ENCODE measurements at regions of chr20 and their contacts with region 1.

Region 1: DNA sequence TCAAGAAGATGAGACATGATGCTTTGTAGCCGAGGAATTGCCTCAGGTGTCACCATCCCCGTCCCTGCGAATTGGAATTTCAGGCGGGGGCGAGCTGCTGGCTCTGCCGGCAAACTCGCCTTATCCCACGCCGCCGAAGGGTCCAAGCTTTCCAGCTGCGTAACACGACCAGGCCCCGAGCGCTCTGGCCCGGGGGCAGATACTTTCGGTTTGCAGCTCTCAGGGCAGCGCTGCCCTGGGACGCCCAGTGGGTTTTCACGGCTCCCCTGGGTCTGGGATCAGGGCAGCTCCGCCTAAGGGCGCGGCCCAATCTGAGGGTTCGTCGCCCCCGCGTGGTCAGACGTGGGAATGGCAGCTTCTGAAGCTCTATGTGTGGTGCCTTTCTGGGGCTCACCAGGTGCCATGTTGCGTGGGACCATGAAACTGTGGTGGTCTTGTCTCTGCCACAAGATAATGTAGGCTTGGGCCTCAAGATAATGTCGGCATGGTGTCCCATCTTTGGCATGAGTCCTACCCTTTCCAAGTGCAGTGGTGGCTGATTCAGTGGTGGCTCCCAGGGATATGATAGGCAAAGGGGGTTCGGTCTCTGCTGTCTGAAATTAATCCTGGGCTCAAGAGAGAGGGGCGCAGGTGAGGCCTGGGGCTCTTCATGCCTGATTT is 20.9 kb downstream of the PIGT start:
- H3K4me3 ChIP-seq: peak overlapping the region; percentile 59
- H3K27ac ChIP-seq: no peak overlapping the region
- H3K4me1 ChIP-seq: 0 out of 2 replicates have a peak, but pooled peaks cover 4% of the 10 kb centered on the region
- CTCF ChIP-seq: peak; percentile 97

Region 2: DNA sequence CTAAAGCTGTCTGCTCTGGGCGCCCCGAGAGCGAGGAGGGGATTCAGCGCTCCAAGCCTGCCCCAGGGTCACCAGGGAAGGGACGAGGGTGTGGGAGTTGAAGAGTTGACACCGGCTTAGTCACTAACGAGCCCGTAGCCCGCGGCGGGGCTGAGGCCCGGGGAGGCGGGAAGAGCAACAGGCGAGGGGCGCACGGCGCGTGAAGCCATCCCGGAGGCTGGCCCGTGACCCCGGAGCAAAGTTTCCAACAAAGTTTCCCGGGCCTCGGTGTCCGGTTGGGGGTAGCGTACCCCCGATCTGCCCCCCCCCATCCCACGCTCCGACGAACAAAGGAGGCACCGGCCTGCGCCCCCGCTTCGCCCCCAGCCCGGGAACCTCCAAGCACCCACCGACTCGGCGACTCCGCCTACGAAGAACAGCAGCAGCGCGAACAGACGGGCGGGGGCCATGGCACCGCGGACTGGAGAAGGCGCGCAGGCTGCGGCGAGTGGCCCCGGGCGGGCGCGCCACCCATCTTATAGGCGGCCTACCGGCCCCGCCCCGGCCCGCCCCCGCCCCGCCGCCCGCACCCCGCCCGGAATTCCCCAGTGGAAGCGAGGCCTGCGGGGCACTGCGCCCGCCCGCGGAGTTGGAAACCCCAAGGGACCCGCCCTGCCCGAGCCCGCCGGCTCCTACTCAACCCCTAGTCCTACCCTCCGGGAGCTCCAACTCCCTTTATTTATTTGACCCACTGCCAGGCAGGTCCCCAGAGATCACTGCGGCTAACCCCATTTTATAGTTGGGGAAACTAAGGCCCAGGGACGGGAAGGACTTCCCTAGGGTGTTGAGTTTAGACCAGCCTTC is 88.7 kb before region 1 on chr20 and contains the start of gene SDC4:
- CTCF ChIA-PET with region 1: interaction called, 8 read pairs
- POLR2A ChIA-PET with region 1: interaction called, 12 read pairs
- H3K4me3 ChIP-seq: peak within 1 kb of the TSS; percentile 52
- H3K27ac ChIP-seq: peak within 1 kb of the TSS; percentile 45; the same call in 1 of the 2 replicates
- H3K4me1 ChIP-seq: peaks cover 21% of the 10 kb centered on the region
- CTCF ChIP-seq: no peak

Region 3: GRCh38 chr20:45392733-45393132 is 44.1 kb before region 1 on chr20:
- CTCF ChIA-PET with region 1: interaction called, 13 read pairs
- POLR2A ChIA-PET with region 1: no interaction called
- H3K4me3 ChIP-seq: no peak overlapping the region
- H3K27ac ChIP-seq: no peak overlapping the region
- H3K4me1 ChIP-seq: no peaks in the 10 kb centered on the region
- CTCF ChIP-seq: peak; percentile 45

Region 4: GRCh38 chr20:45415774-45416637 is 20.9 kb before region 1 on chr20 and contains the start of gene PIGT:
- CTCF ChIA-PET with region 1: interaction called, 10 read pairs
- POLR2A ChIA-PET with region 1: interaction called, 7 read pairs
- H3K4me3 ChIP-seq: peak within 1 kb of the TSS; percentile 95
- H3K27ac ChIP-seq: no peak within 1 kb of the TSS; the same call in 1 of the 2 replicates
- H3K4me1 ChIP-seq: no peaks in the 10 kb centered on the region; the same call in 1 of the 2 replicates
- CTCF ChIP-seq: no peak

Region 5: GRCh38 chr20:45589725-45590124 is 152.9 kb after region 1 on chr20:
- CTCF ChIA-PET with region 1: no interaction called
- POLR2A ChIA-PET with region 1: no interaction called
- H3K4me3 ChIP-seq: no peak overlapping the region
- H3K27ac ChIP-seq: no peak overlapping the region
- H3K4me1 ChIP-seq: no peaks in the 10 kb centered on the region
- CTCF ChIP-seq: no peak

Region 6: DNA sequence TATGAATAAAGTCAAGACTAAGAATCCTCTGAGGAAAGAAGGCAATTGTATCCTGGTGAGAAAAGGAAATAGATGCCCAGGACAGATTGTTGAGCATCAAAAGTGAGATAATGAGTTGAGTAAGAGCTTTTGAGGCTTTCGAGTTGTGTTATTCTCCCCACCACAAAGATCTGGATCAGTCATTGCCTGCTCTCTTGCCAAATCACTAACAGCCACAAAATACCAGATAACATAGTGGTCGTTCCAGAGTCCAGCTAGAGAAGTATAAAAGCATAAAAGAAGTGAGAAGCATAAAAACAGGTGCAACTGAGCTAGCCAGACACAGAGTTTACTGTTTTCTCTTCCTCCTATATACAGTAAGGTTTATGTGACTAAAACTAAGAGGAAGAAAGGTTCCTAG is 290.2 kb after region 1 on chr20:
- CTCF ChIA-PET with region 1: no interaction called
- POLR2A ChIA-PET with region 1: no interaction called
- H3K4me3 ChIP-seq: no peak overlapping the region
- H3K27ac ChIP-seq: no peak overlapping the region
- H3K4me1 ChIP-seq: no peaks in the 10 kb centered on the region
- CTCF ChIP-seq: no peak

Measured in HEK293 (cell line).